Activated CD4-positive, alpha-beta T cell treated with anti-CD3 and anti-CD28 coated beads for 36 hours (primary cell): ENCODE measurements at regions of chr19 and their contacts with region 1.

Region 1: GRCh38 chr19:3125900-3126524 is 9.8 kb upstream of the GNA15 start:
- DNase-seq: peak; percentile 93
- ATAC-seq: peak; percentile 97
- H3K4me3 Mint-ChIP-seq: no peak overlapping the region
- H3K27ac Mint-ChIP-seq: no peak overlapping the region
- H3K4me1 Mint-ChIP-seq: peaks cover 4% of the 10 kb centered on the region
- H3K27me3 Mint-ChIP-seq: no peaks in the 10 kb centered on the region

Region 2: GRCh38 chr19:2856457-2857050 is 269.5 kb before region 1 on chr19:
- CTCF ChIA-PET with region 1: no interaction called
- POLR2A ChIA-PET with region 1: no interaction called
- intact Hi-C with region 1: no loop called
- DNase-seq: no peak
- ATAC-seq: peak; percentile 39
- H3K4me3 Mint-ChIP-seq: no peak overlapping the region
- H3K27ac Mint-ChIP-seq: peak overlapping the region; percentile 82
- H3K4me1 Mint-ChIP-seq: peaks cover 22% of the 10 kb centered on the region
- H3K27me3 Mint-ChIP-seq: no peaks in the 10 kb centered on the region

Region 3: GRCh38 chr19:2992958-2993357 is 133.1 kb before region 1 on chr19:
- CTCF ChIA-PET with region 1: no interaction called
- POLR2A ChIA-PET with region 1: no interaction called
- intact Hi-C with region 1: no loop called
- DNase-seq: no peak
- ATAC-seq: no peak
- H3K4me3 Mint-ChIP-seq: no peak overlapping the region
- H3K27ac Mint-ChIP-seq: no peak overlapping the region
- H3K4me1 Mint-ChIP-seq: no peaks in the 10 kb centered on the region
- H3K27me3 Mint-ChIP-seq: no peaks in the 10 kb centered on the region

Region 4: DNA sequence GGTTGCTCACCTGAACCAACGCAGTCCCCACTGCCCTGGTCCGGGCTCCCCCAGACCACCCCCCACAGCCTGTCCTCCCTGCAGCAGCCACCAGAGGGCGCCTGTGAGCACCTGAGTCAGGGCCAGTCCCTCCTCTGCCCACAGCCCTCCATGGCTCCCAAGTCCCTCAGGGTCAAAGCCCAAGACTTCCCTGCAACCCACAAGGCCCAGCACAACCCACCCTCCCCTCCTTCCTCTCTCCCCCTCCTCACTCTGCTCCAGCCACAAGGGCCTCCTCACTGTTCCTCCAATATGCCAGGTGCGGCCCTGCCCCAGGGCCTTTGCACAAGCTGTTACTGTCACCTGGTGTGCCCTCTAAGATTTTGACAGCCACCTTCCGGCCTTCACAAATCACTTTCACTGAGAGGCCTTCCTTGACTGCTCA is 20.7 kb after region 1 on chr19:
- CTCF ChIA-PET with region 1: interaction called, 32 read pairs
- POLR2A ChIA-PET with region 1: no interaction called
- intact Hi-C with region 1: no loop called
- DNase-seq: peak; percentile 83
- ATAC-seq: peak; percentile 55
- H3K4me3 Mint-ChIP-seq: no peak overlapping the region
- H3K27ac Mint-ChIP-seq: no peak overlapping the region
- H3K4me1 Mint-ChIP-seq: peaks cover 20% of the 10 kb centered on the region
- H3K27me3 Mint-ChIP-seq: no peaks in the 10 kb centered on the region

Region 5: DNA sequence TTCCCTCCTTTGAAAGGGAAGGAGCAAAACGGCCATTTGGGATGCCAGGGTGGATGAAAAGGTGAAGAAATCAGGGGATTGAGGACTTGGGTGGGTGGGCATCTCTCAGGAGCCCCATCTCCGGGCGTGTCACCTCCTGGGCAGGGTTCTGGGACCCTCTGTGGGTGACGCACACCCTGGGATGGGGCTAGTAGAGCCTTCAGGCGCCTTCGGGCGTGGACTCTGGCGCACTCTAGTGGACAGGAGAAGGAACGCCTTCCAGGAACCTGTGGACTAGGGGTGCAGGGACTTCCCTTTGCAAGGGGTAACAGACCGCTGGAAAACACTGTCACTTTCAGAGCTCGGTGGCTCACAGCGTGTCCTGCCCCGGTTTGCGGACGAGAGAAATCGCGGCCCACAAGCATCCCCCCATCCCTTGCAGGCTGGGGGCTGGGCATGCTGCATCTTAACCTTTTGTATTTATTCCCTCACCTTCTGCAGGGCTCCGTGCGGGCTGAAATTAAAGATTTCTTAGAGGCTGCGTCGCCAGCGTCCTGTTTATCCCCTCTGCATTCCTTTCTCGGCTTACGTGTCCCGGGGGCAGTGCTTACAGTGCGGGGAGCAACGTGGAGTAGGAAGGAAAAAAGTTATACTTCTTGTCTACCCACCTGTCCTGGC is 37.3 kb after region 1 on chr19:
- CTCF ChIA-PET with region 1: interaction called, 13 read pairs
- POLR2A ChIA-PET with region 1: no interaction called
- intact Hi-C with region 1: loop called (anchors 1 kb)
- DNase-seq: peak; percentile 82
- ATAC-seq: peak; percentile 82
- H3K4me3 Mint-ChIP-seq: no peak overlapping the region
- H3K27ac Mint-ChIP-seq: peak overlapping the region; percentile 42
- H3K4me1 Mint-ChIP-seq: peaks cover 23% of the 10 kb centered on the region
- H3K27me3 Mint-ChIP-seq: no peaks in the 10 kb centered on the region

Region 6: DNA sequence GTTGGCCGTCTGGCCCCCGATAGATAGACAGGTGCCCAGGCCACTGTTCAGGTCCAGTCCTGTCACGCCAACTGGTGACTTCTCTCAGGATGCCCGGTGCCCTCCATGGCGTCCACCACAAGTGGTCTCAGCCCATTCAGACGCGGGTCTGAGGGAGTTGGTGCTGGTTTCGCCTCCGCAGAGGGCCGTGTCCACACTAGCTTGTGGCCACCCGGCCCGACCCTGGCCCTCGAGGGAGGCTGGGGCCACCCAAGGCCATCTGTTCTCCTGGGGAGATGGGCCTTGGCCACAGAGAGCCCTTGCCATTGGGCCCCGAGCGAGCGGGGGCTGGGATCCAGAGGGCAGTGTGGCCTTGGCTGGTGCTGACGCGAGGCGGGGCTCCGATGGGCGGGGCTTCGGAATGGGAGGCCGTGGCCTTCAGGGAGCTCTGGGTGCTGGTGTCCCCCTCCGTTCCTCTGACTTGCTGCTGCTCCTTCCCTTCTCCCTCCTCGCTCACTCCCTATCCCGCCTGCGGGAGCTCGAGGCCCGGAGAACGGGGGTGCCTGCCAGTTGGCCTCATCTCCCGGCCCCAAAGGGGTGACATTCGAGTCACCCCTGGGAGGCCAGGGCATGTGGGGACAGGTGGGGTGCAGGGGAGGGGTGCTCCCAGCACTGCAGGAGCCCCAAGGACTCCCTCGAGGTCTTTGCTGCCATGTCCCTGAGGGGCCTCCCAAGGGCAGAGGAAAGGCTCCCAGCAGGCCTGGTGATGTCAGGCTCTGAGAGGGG is 63.7 kb after region 1 on chr19:
- CTCF ChIA-PET with region 1: no interaction called
- POLR2A ChIA-PET with region 1: no interaction called
- intact Hi-C with region 1: no loop called
- DNase-seq: no peak
- ATAC-seq: no peak
- H3K4me3 Mint-ChIP-seq: no peak overlapping the region
- H3K27ac Mint-ChIP-seq: no peak overlapping the region
- H3K4me1 Mint-ChIP-seq: peaks cover 37% of the 10 kb centered on the region
- H3K27me3 Mint-ChIP-seq: no peaks in the 10 kb centered on the region

Region 7: GRCh38 chr19:3210347-3211017 is 84.5 kb after region 1 on chr19:
- CTCF ChIA-PET with region 1: no interaction called
- POLR2A ChIA-PET with region 1: interaction called, 13 read pairs
- intact Hi-C with region 1: no loop called
- DNase-seq: peak; percentile 86
- ATAC-seq: peak; percentile 98
- H3K4me3 Mint-ChIP-seq: no peak overlapping the region
- H3K27ac Mint-ChIP-seq: no peak overlapping the region
- H3K4me1 Mint-ChIP-seq: no peaks in the 10 kb centered on the region
- H3K27me3 Mint-ChIP-seq: no peaks in the 10 kb centered on the region